Naive thymus-derived CD4-positive, alpha-beta T cell (primary cell): ENCODE measurements at regions of chr18 and their contacts with region 1.

Region 1: GRCh38 chr18:61926532-61926931 is 33.7 kb upstream of the RNF152 start:
- DNase-seq: peak in 3 of 9 donors; percentile 8 to 47 (median 13)
- ATAC-seq: peak; percentile 53
- H3K4me3 ChIP-seq: no peak overlapping the region
- H3K4me3 Mint-ChIP-seq: peak overlapping the region in 6 of 10 donors; percentile 24 to 56 (median 37)
- H3K27ac ChIP-seq: no peak overlapping the region
- H3K27ac Mint-ChIP-seq: no peak overlapping the region
- H3K4me1 ChIP-seq: peaks cover 10 to 14% of the 10 kb centered on the region in 2 donors
- H3K4me1 Mint-ChIP-seq: peaks cover 7 to 23% (median 18%) of the 10 kb centered on the region in 7 donors
- H3K27me3 ChIP-seq: no peaks in the 10 kb centered on the region
- H3K27me3 Mint-ChIP-seq: peaks cover 0 to 4% (median 0%) of the 10 kb centered on the region in 5 donors

Region 2: GRCh38 chr18:62118328-62118727 is 191.8 kb after region 1 on chr18:
- CTCF ChIA-PET with region 1: no interaction called
- POLR2A ChIA-PET with region 1: no interaction called
- intact Hi-C with region 1: loop called in 1 of 2 experiments (anchors 10 kb)
- DNase-seq: no peak
- ATAC-seq: no peak
- H3K4me3 ChIP-seq: no peak overlapping the region
- H3K4me3 Mint-ChIP-seq: no peak overlapping the region
- H3K27ac ChIP-seq: no peak overlapping the region
- H3K27ac Mint-ChIP-seq: no peak overlapping the region
- H3K4me1 ChIP-seq: no peaks in the 10 kb centered on the region
- H3K4me1 Mint-ChIP-seq: no peaks in the 10 kb centered on the region
- H3K27me3 ChIP-seq: no peaks in the 10 kb centered on the region
- H3K27me3 Mint-ChIP-seq: no peaks in the 10 kb centered on the region

Region 3: DNA sequence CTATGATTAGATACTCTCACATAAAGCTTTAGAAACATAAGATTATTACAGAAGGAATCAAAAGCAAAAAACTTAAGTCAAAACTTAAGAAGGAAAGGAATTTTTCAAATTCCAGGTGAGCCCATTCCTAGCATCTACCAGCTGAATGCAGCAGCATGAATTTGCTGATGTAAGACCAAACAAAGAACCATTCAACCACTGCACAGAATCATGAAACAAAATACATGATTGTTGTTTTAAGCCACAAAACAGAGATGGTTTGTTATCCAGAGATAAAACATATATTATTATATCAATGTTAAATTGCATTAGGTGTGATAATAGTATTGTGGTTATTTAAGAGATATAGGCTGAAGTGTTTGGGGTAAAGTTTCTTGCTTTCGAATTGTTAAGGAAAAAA is 231.3 kb after region 1 on chr18:
- CTCF ChIA-PET with region 1: no interaction called
- POLR2A ChIA-PET with region 1: no interaction called
- intact Hi-C with region 1: no loop called
- DNase-seq: no peak
- ATAC-seq: no peak
- H3K4me3 ChIP-seq: no peak overlapping the region
- H3K4me3 Mint-ChIP-seq: no peak overlapping the region
- H3K27ac ChIP-seq: no peak overlapping the region
- H3K27ac Mint-ChIP-seq: no peak overlapping the region
- H3K4me1 ChIP-seq: no peaks in the 10 kb centered on the region
- H3K4me1 Mint-ChIP-seq: peaks cover 0 to 2% (median 0%) of the 10 kb centered on the region in 7 donors
- H3K27me3 ChIP-seq: no peaks in the 10 kb centered on the region
- H3K27me3 Mint-ChIP-seq: no peaks in the 10 kb centered on the region